ENCODE measurements at regions of chr18 and their contacts with region 1.

Region 1: GRCh38 chr18:47930931-47931717 is 665 bp upstream of the SMAD2 start:
- DNase-seq: peak; percentile 96
- H3K4me3 ChIP-seq: peak overlapping the region; percentile 64
- H3K27ac ChIP-seq: peak overlapping the region; percentile 99
- H3K4me1 ChIP-seq: peaks cover 9% of the 10 kb centered on the region
- H3K27me3 ChIP-seq: no peaks in the 10 kb centered on the region
- CTCF ChIP-seq: no peak

Region 2: GRCh38 chr18:47635416-47635815 is 295.7 kb before region 1 on chr18:
- intact Hi-C with region 1: no loop called
- DNase-seq: no peak
- H3K4me3 ChIP-seq: no peak overlapping the region
- H3K27ac ChIP-seq: no peak overlapping the region
- H3K4me1 ChIP-seq: no peaks in the 10 kb centered on the region
- H3K27me3 ChIP-seq: no peaks in the 10 kb centered on the region
- CTCF ChIP-seq: no peak

Region 3: DNA sequence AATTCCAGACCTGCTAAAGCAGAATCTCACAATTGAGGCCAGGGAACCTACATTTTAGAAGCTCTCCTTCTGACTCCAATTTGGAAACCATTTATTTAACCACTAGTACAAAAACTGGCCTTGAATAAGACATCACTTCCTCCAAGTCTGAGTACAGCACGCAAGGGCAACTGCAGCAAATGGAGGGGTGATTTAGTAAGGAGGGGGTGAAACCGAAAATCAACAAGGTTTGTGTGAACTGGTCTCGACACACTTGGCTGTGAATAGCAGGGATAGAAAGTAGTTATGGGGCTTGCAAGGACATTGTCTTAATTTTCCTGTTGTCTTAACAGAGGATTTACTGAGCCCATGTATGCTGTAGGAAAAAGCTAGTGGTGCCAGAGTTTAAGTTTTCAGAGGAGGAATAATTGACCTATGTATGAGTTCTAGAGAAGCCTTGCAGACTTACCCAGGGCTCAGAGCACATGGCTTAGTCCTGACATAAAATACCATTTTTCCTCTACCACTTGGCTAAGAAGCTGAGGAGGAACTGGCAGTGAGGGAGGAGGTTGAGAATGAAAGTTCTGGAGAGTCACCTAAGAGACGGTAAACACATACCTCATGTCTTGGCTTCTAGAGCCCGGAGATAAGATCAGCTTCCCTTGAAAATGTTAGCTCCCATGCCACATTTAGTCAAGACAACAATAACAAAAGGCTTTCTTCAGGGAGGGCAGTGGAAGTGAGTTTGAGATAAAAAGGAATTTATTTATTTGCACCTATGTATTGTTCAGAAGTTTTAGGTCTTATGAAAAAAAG is 115.4 kb before region 1 on chr18:
- intact Hi-C with region 1: no loop called
- DNase-seq: no peak
- H3K4me3 ChIP-seq: no peak overlapping the region
- H3K27ac ChIP-seq: no peak overlapping the region
- H3K4me1 ChIP-seq: no peaks in the 10 kb centered on the region
- H3K27me3 ChIP-seq: no peaks in the 10 kb centered on the region
- CTCF ChIP-seq: no peak

Region 4: DNA sequence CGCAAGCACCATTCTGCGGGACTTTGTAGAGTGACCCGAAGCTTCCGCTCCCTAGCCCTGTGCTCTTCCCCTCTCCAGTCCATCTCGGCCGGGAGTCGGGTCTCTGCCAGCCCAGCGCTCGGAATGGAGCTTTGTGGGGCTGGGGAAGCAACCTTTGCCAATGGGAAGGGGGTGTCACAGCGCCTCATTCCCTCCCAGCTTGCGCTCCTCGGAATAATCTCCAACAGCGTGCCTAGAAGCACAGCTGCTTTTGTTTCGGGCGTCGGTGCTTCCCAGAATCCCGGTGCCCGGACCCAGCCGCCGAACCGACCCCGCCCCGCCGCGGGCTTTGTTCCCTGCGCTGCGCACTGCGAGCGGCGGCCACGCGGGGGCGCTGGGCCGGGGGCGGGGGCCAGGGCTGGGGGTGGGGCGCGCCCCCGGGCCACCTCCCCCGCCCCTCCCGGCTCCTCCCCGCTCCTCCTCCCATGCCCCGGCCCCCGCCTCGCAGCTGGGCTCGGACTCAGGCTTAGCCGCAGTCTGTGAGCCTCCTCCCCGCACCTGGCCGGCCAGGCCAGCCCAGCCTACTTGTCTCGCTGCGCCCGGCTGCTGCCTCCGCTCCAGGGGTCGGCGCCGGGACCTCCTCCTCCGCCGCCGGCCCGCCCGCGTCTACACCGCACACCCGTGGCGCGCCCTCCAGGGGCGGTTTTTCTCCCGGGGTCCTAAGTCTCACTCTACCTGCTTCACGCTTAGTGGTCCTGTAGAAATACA is 77.0 kb after region 1 on chr18:
- intact Hi-C with region 1: loop called (anchors 5 kb)
- DNase-seq: peak; percentile 77
- H3K4me3 ChIP-seq: peak overlapping the region; percentile 49
- H3K27ac ChIP-seq: no peak overlapping the region
- H3K4me1 ChIP-seq: no peaks in the 10 kb centered on the region
- H3K27me3 ChIP-seq: no peaks in the 10 kb centered on the region
- CTCF ChIP-seq: peak; percentile 59